IMR-90 (cell line): ENCODE measurements at regions of chr15 and their contacts with region 1.

Region 1: GRCh38 chr15:65952425-65953053 is 83.2 kb downstream of the RAB11A start:
- DNase-seq: peak; percentile 65
- ATAC-seq: peak; percentile 75
- H3K4me3 ChIP-seq: no peak overlapping the region
- H3K27ac ChIP-seq: no peak overlapping the region
- H3K4me1 ChIP-seq: no peaks in the 10 kb centered on the region
- H3K27me3 ChIP-seq: peaks cover 22% of the 10 kb centered on the region
- CTCF ChIP-seq: no peak
- POLR2A ChIP-seq: no peak
- RAD21 ChIP-seq: no peak

Region 2: GRCh38 chr15:65355173-65355987 is 597.2 kb before region 1 on chr15:
- CTCF ChIA-PET with region 1: no interaction called
- POLR2A ChIA-PET with region 1: no interaction called
- dilution Hi-C with region 1: no loop called
- in situ Hi-C with region 1: no loop called
- intact Hi-C with region 1: no loop called
- DNase-seq: no peak
- ATAC-seq: peak; percentile 35; the same call in 1 of the 2 replicates
- H3K4me3 ChIP-seq: peak overlapping the region; percentile 17; the same call in 1 of the 2 replicates
- H3K27ac ChIP-seq: no peak overlapping the region
- H3K4me1 ChIP-seq: peaks cover 4% of the 10 kb centered on the region; the same call in 1 of the 2 replicates
- H3K27me3 ChIP-seq: peaks cover 48% of the 10 kb centered on the region
- CTCF ChIP-seq: no peak
- POLR2A ChIP-seq: no peak
- RAD21 ChIP-seq: no peak

Region 3: DNA sequence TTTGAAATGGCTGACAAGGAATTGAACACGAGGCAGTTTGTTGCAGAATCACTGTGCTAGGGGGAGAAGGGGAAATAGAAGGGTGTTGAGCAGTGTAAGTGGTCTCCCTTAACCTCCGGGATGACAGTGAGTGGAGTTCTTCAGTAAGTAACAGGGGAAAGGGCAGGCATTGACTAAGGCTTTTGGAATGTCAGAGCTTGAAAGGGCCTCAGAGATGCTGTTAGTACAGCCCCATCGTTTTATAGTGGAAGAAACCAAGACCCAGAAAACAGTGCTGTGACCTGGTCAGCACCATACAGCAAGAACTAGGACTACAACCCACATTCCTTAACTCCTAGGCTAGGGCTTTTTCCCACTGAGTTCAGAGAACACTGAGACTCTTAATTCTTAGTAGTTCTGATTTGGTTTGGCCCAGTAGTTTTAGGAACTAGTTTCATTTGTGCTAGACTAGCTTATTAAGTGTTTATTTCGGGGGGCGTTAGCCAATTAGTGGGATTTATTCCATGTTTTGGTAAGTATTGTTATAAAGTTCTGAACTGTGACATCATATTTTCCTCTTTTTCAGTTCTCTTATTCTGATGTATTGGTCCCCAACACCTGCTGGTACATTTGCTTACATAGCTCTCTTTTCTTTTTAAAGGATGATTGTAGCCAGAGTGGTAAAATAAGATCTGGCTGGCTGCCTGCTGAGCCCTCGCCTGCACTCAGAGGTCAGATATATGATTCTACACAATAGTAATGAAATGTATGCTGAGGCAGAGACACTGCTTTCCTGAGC is 49.1 kb before region 1 on chr15:
- CTCF ChIA-PET with region 1: no interaction called
- POLR2A ChIA-PET with region 1: interaction called, 12 read pairs
- dilution Hi-C with region 1: no loop called
- in situ Hi-C with region 1: no loop called
- intact Hi-C with region 1: no loop called
- DNase-seq: peak; percentile 51
- ATAC-seq: peak; percentile 77
- H3K4me3 ChIP-seq: no peak overlapping the region
- H3K27ac ChIP-seq: no peak overlapping the region
- H3K4me1 ChIP-seq: peaks cover 5% of the 10 kb centered on the region
- H3K27me3 ChIP-seq: no peaks in the 10 kb centered on the region
- CTCF ChIP-seq: no peak
- POLR2A ChIP-seq: no peak
- RAD21 ChIP-seq: no peak

Region 4: DNA sequence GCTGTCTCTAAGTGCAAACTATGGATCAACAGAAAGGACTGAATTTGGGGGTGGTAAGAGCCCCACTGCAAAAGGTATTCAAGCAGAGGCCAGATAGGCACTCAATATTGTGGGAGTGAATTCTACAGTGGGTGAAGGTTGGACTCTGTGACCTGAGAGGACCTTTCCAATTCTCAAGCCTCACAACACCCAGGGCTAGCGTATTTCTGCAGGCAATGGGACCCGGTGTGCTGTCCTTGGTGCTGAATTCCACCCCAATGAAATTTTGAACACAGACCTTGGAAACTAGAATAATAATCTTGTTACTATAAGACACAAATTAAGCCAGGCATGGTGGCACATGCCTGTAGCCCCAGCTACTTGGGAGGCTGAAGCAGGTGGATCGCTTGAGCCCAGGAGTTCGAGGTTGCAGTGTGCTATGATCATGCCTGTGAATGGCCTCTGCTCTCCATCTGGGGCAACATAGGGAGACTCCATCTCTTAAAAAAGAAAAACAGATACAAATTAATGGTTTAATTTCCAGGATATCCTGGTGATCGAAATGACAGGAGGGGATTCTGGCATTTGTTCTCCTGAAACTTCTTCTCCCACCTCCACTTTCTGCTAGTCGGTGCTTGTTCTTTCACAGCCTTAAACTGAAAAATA is 52.2 kb after region 1 on chr15:
- CTCF ChIA-PET with region 1: no interaction called
- POLR2A ChIA-PET with region 1: no interaction called
- dilution Hi-C with region 1: no loop called
- in situ Hi-C with region 1: no loop called
- intact Hi-C with region 1: loop called (anchors 2 kb)
- DNase-seq: peak; percentile 31
- ATAC-seq: peak; percentile 54; the same call in 1 of the 2 replicates
- H3K4me3 ChIP-seq: no peak overlapping the region
- H3K27ac ChIP-seq: no peak overlapping the region
- H3K4me1 ChIP-seq: no peaks in the 10 kb centered on the region
- H3K27me3 ChIP-seq: peaks cover 12% of the 10 kb centered on the region
- CTCF ChIP-seq: no peak
- POLR2A ChIP-seq: no peak
- RAD21 ChIP-seq: no peak